ENCODE measurements at regions of chr10 and their contacts with region 1.

Region 1: GRCh38 chr10:120850911-120851865 is at the start of gene WDR11:
- DNase-seq: peak; percentile 80
- H3K4me3 Mint-ChIP-seq: peak within 1 kb of the TSS; percentile 99
- H3K27ac Mint-ChIP-seq: peak within 1 kb of the TSS; percentile 93
- H3K4me1 Mint-ChIP-seq: peaks cover 42% of the 10 kb centered on the region
- H3K27me3 Mint-ChIP-seq: no peaks in the 10 kb centered on the region
- total RNA-seq, gene WDR11: 32.4 to 33.6 TPM

Region 2: GRCh38 chr10:119892188-119893065 is 958.8 kb before region 1 on chr10 and contains the start of gene SEC23IP:
- CTCF ChIA-PET with region 1: no interaction called
- intact Hi-C with region 1: loop called (anchors 10 kb)
- DNase-seq: peak; percentile 95
- H3K4me3 Mint-ChIP-seq: peak within 1 kb of the TSS; percentile 95
- H3K27ac Mint-ChIP-seq: peak within 1 kb of the TSS; percentile 92
- H3K4me1 Mint-ChIP-seq: peaks cover 49% of the 10 kb centered on the region
- H3K27me3 Mint-ChIP-seq: no peaks in the 10 kb centered on the region
- total RNA-seq, gene SEC23IP: 49.0 to 55.2 TPM